Psoas muscle (tissue), 8 donors: ENCODE measurements at regions of chr19 and their contacts with region 1.

Region 1: GRCh38 chr19:44164673-44165512 is at the start of gene ZNF226:
- DNase-seq: peak; percentile 83 to 90
- ATAC-seq: peak; percentile 100
- H3K4me3 ChIP-seq: peak within 1 kb of the TSS; percentile 92
- H3K27ac ChIP-seq: peak within 1 kb of the TSS; percentile 88
- H3K4me1 ChIP-seq: peaks cover 11% of the 10 kb centered on the region
- H3K27me3 ChIP-seq: no peaks in the 10 kb centered on the region
- CTCF ChIP-seq: no peak
- total RNA-seq, gene ZNF226: 4.4 to 8.6 (median 7.8) TPM

Region 2: DNA sequence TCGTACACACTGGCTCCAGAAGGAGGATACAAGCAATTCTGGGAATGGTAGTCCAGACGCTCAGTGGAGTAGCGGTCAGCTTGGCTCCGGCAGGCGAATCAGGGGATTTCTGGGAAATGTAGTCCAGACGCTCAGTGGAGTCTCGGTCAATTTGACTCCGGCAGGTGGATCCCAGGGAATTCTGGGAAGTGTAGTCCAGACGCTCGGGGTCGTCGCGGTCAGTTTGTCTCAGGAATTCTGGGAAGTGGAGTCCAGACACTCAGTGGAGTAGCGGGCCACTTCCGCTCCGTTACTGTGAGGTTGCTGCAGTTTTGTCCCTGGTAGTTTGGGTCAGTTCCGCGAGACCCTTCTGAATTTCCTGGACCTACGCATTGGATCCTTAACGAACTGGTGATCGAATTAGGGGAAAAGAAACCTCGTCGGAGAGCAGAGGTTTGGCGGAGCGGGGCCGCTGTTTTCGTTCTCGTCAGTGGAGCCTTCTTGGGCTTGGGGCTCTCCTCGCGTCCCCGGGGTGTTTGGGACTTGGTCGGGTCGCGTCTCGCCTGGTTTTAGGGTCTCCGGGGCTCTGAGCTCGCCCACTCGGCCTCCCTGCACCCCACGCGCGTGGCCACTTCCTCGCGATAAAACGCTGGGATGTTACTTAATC is 51.6 kb before region 1 on chr19 and contains the start of gene ZNF225:
- intact Hi-C with region 1: loop called (anchors 2 to 5 kb)
- DNase-seq: peak; percentile 93 to 95
- ATAC-seq: peak; percentile 99 to 100 (median 100)
- H3K4me3 ChIP-seq: peak within 1 kb of the TSS; percentile 93
- H3K27ac ChIP-seq: peak within 1 kb of the TSS; percentile 88
- H3K4me1 ChIP-seq: peaks cover 15% of the 10 kb centered on the region
- H3K27me3 ChIP-seq: no peaks in the 10 kb centered on the region
- CTCF ChIP-seq: peak; percentile 10
- total RNA-seq, gene ZNF225: 0.61 to 2.9 (median 1.4) TPM

Region 3: GRCh38 chr19:44141191-44142058 is 23.5 kb before region 1 on chr19 and contains the start of gene ZNF234:
- intact Hi-C with region 1: loop called in 1 of 2 experiments (anchors 2 kb)
- DNase-seq: peak; percentile 83 to 89
- ATAC-seq: peak; percentile 97 to 99 (median 98)
- H3K4me3 ChIP-seq: peak within 1 kb of the TSS; percentile 90
- H3K27ac ChIP-seq: peak within 1 kb of the TSS; percentile 80
- H3K4me1 ChIP-seq: peaks cover 9% of the 10 kb centered on the region
- H3K27me3 ChIP-seq: no peaks in the 10 kb centered on the region
- CTCF ChIP-seq: no peak
- total RNA-seq, gene ZNF234: 4.0 to 6.4 (median 4.1) TPM

Region 4: DNA sequence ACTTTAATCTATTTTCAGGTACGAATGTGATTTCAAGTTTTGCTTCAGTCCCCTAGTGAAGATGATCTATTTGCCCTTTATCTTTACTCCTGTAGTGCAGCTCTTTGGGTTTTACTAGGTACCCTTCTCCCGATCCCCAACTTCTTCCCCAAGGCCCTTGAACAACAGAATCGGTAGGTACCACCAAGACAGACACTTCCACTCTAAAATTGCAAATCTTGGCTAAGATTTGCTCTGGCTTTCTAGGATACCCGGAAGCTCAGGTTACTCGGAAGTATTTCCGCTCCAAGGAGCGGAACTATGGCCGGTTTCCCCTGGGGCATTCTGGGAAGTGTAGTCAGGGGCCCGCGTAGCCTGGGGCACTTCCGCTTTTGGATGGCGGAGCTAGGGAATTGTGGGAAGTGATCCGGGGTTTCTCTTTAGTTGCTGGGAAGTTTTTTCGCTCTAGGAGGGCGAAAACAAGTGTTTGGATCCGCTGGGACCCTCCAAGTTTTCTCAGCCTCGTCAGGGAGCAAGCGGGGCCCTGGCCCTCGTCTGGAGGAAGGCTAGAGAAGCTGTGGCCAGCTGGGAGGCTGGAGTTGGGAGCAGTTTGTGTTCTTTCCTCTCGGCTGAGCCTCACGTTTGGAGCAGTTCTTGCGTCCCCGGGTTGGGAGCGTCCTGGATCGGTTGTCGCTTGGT is 42.4 kb after region 1 on chr19:
- intact Hi-C with region 1: loop called (anchors 2 to 5 kb)
- DNase-seq: peak; percentile 86 to 91
- ATAC-seq: peak; percentile 91 to 98 (median 95)
- H3K4me3 ChIP-seq: peak overlapping the region; percentile 90
- H3K27ac ChIP-seq: peak overlapping the region; percentile 91
- H3K4me1 ChIP-seq: no peaks in the 10 kb centered on the region
- H3K27me3 ChIP-seq: no peaks in the 10 kb centered on the region
- CTCF ChIP-seq: no peak

Region 5: DNA sequence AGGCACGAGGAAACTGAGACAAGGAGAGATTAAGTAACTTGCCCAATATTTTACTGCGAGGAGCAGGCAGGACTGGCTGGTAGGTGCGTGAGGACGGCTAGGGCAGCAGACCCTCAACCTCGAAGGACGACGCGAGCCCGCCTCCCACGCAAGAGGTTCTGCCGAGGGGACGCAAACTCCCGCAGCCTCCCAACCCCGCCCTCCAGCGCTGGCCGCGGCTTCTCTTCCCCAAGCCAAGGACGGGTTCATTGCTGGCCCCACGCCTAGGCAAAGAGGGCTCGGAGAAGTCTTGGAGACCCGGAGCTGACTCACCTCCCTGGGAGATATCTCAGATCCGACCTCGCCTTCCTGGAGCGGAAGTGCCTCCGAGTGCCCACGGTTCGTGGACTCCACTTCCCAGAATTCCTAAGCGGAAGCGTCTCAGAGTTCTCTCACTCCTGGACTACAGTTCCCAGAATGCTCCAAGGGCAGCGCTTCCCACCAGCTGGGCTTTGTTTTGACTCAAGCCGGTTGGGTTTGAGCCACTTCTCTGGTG is 139.8 kb after region 1 on chr19 and contains the start of gene ZNF235:
- intact Hi-C with region 1: loop called in 1 of 2 experiments (anchors 10 kb)
- DNase-seq: peak; percentile 92 to 96
- ATAC-seq: peak; percentile 100
- H3K4me3 ChIP-seq: peak within 1 kb of the TSS; percentile 92
- H3K27ac ChIP-seq: peak within 1 kb of the TSS; percentile 82
- H3K4me1 ChIP-seq: peaks cover 3% of the 10 kb centered on the region
- H3K27me3 ChIP-seq: no peaks in the 10 kb centered on the region
- CTCF ChIP-seq: no peak
- total RNA-seq, gene ZNF235: 1.4 to 2.6 (median 2.1) TPM

Region 6: DNA sequence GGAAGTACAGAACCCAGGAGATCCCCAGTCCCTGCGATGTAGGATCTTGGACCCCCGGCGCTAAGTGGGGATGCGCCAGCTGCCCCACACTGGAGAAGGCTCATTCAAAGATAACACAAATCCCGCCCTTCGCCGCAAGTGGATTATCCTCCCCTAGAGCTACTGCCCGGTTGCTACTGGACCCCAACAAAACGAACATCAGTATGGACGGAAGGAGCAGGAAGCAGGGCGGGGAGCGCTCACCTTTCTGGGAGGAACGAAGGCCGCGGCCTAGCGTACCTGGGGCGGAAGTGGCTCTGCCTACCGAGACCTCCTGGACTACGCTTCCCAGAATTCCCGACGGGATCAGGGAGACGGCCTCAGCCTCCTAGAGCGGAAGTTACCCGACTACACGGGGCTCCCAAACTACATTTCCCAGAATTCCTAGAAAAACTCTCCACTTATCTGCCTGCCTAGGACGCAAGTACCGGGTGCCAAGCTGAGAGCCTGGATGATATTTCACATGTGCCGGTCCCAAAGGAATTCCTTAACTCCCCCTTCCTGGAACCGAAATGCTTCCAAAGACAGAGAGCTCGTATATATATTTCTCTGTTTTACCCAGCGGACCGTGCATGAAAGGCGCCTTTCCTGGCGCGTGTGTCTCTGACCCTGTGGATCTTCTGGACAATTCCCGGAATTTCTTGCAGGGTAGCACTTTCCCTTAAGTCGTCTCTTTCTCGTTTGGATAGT is 191.7 kb after region 1 on chr19 and contains the start of gene ZNF112:
- intact Hi-C with region 1: loop called in 1 of 2 experiments (anchors 10 kb)
- DNase-seq: peak; percentile 80 to 91
- ATAC-seq: peak; percentile 98 to 100 (median 100)
- H3K4me3 ChIP-seq: peak within 1 kb of the TSS; percentile 79
- H3K27ac ChIP-seq: peak within 1 kb of the TSS; percentile 55
- H3K4me1 ChIP-seq: peaks cover 5% of the 10 kb centered on the region
- H3K27me3 ChIP-seq: no peaks in the 10 kb centered on the region
- CTCF ChIP-seq: no peak
- total RNA-seq, gene ZNF112: 1.4 to 4.8 (median 1.7) TPM